T-cell (primary cell): ENCODE measurements at regions of chr7 and their contacts with region 1.

Region 1: DNA sequence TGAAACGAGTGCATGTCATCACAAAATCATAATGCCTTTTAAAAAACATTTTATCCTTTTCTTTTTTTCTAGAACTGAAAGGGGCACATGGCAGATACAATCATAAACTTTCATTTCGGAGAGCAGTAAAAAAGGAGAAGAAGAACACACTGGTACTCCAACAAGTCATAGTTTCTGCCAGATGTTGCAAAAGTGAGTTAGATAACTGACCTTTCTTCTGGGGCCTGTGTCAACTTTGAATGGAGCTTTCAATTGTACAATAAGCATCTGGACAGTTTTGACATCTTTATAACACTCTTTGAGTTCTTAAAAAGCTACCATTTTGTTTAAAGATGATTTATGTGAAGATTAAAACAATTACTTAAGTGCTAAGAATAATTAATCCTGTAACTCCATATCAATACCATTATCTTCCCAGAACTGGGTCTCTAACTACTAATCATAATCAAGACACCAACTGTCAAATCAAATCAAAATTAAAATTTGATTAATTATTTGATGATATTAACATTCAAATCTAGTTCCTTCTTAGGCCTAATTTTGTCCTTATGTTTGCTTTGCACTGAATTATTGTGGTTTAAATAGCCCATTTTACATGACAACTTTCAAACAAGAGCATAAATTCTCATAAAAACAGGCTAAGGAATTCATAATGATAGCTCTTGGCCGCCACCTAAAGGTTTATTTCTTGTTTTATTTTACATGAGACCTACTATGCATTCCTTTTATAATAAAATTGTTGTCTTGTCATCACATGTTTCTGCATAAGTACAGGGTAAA is 19.5 kb upstream of the ITGB8 start:
- DNase-seq: peak in 1 of 35 experiments; percentile 28
- ATAC-seq: no peak
- H3K4me3 ChIP-seq: no peak overlapping the region
- H3K4me3 Mint-ChIP-seq: no peak overlapping the region
- H3K27ac ChIP-seq: no peak overlapping the region
- H3K27ac Mint-ChIP-seq: no peak overlapping the region
- H3K4me1 ChIP-seq: no peaks in the 10 kb centered on the region
- H3K4me1 Mint-ChIP-seq: no peaks in the 10 kb centered on the region
- H3K27me3 ChIP-seq: no peaks in the 10 kb centered on the region
- H3K27me3 Mint-ChIP-seq: no peaks in the 10 kb centered on the region

Region 2: GRCh38 chr7:20199015-20199737 is 112.0 kb before region 1 on chr7:
- CTCF ChIA-PET with region 1: no interaction called
- POLR2A ChIA-PET with region 1: no interaction called
- DNase-seq: peak in 3 of 35 experiments; percentile 4 to 21 (median 8)
- ATAC-seq: peak in 2 of 4 experiments; percentile 9 to 22
- H3K4me3 ChIP-seq: no peak overlapping the region
- H3K4me3 Mint-ChIP-seq: no peak overlapping the region
- H3K27ac ChIP-seq: no peak overlapping the region
- H3K27ac Mint-ChIP-seq: no peak overlapping the region
- H3K4me1 ChIP-seq: no peaks in the 10 kb centered on the region
- H3K4me1 Mint-ChIP-seq: peaks cover 2 to 6% (median 5%) of the 10 kb centered on the region in 3 donors
- H3K27me3 ChIP-seq: no peaks in the 10 kb centered on the region
- H3K27me3 Mint-ChIP-seq: no peaks in the 10 kb centered on the region

Region 3: GRCh38 chr7:20327055-20327454 is 15.9 kb after region 1 on chr7:
- CTCF ChIA-PET with region 1: no interaction called
- POLR2A ChIA-PET with region 1: interaction called in 1 of 2 experiments, 10 read pairs
- DNase-seq: no peak
- ATAC-seq: no peak
- H3K4me3 ChIP-seq: no peak overlapping the region
- H3K4me3 Mint-ChIP-seq: no peak overlapping the region
- H3K27ac ChIP-seq: no peak overlapping the region
- H3K27ac Mint-ChIP-seq: no peak overlapping the region
- H3K4me1 ChIP-seq: peaks cover 1 to 23% of the 10 kb centered on the region in 2 experiments
- H3K4me1 Mint-ChIP-seq: peaks cover 18 to 20% (median 19%) of the 10 kb centered on the region in 3 donors
- H3K27me3 ChIP-seq: peaks cover 0 to 25% of the 10 kb centered on the region in 2 experiments
- H3K27me3 Mint-ChIP-seq: peaks cover 20 to 27% of the 10 kb centered on the region in 2 donors

Region 4: DNA sequence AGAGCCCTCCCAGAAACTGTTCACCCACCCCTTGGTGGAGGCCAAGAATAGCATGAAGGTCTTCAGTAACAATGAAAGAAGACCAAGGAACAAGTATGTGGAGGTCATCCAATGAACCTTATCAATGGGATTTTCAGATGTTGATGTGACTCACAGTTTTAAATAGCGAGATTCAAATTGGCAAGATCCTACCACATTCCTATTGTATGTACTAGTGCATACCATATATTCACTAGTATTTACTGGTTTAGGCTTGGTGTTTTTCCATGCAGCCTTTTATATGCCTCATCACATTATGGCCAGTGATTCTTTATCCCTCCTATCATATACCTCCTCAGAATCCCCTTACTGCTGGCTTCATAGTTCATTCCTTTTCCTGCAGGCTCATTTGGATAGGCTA is 74.0 kb after region 1 on chr7:
- CTCF ChIA-PET with region 1: no interaction called
- POLR2A ChIA-PET with region 1: no interaction called
- DNase-seq: no peak
- ATAC-seq: no peak
- H3K4me3 ChIP-seq: no peak overlapping the region
- H3K4me3 Mint-ChIP-seq: no peak overlapping the region
- H3K27ac ChIP-seq: no peak overlapping the region
- H3K27ac Mint-ChIP-seq: no peak overlapping the region
- H3K4me1 ChIP-seq: no peaks in the 10 kb centered on the region
- H3K4me1 Mint-ChIP-seq: no peaks in the 10 kb centered on the region
- H3K27me3 ChIP-seq: no peaks in the 10 kb centered on the region
- H3K27me3 Mint-ChIP-seq: no peaks in the 10 kb centered on the region